ENCODE measurements at regions of chr6 and their contacts with region 1.

Region 1: DNA sequence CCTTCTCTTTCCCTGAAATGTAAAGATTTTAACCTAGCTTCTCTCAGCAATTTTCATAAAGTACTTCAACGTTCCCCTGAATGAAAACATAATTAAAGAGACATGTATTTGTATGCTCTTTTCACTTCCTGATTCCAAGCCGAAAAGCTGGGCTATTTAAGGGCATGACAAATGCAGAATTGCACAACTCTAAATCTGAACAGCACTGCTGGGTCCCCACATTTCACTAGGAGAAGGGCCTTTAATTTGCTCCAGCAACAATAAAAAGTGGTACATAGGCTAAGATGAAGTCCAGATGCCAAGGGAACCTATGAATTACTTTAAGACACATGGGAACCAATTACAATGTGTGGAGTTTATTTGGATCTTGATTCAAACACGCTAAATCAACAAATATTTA is 42.0 kb downstream of the IRAK1BP1 start:
- DNase-seq: no peak
- H3K4me3 ChIP-seq: no peak overlapping the region
- CTCF ChIP-seq: no peak

Region 2: GRCh38 chr6:78835817-78836216 is 73.6 kb before region 1 on chr6:
- in situ Hi-C with region 1: no loop called
- DNase-seq: no peak
- H3K4me3 ChIP-seq: no peak overlapping the region
- CTCF ChIP-seq: no peak

Region 3: GRCh38 chr6:78867370-78868040 is 41.9 kb before region 1 on chr6 and contains the start of gene IRAK1BP1:
- in situ Hi-C with region 1: no loop called
- DNase-seq: peak; percentile 32
- H3K4me3 ChIP-seq: peak within 1 kb of the TSS; percentile 74
- CTCF ChIP-seq: peak; percentile 40

Region 4: GRCh38 chr6:78947962-78948361 is 38.6 kb after region 1 on chr6:
- in situ Hi-C with region 1: loop called (anchors 5 kb)
- DNase-seq: peak; percentile 43
- H3K4me3 ChIP-seq: no peak overlapping the region
- CTCF ChIP-seq: no peak

Region 5: GRCh38 chr6:78967191-78967590 is 57.8 kb after region 1 on chr6:
- in situ Hi-C with region 1: no loop called
- DNase-seq: no peak
- H3K4me3 ChIP-seq: no peak overlapping the region
- CTCF ChIP-seq: no peak

Measured in astrocyte of the cerebellum (primary cell).